MCF 10A (cell line): ENCODE measurements at regions of chr18 and their contacts with region 1.

Region 1: DNA sequence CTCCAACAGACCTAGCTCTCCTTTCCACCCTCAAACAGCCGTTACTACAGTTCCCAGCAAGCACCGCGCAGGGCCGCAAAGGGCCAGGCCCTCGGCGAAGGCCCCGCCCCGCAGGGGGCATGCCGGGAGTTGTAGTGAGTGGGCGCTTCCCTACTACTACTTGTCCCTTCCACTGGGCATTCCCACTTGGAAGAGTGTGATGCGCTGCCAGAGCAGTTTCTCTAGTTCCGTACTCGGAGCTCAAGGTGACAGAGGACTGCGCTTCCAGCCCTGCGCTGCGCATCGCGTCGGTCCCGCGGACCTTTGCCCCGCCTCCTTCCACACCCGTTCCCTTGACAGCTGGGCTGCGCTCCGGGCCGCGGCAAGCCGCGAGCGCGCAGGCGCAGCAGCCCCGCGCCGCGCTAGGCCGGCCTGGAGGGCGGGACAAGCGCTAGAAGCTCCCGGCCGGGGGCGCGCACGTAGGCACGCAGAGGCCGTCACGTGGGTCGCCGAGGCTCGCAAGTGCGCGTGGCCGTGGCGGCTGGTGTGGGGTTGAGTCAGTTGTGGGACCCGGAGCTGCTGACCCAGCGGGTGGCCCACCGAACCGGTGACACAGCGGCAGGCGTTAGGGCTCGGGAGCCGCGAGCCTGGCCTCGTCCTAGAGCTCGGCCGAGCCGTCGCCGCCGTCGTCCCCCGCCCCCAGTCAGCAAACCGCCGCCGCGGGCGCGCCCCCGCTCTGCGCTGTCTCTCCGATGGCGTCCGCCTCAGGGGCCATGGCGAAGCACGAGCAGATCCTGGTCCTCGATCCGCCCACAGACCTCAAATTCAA is at the start of gene VAPA:
- DNase-seq: peak; percentile 93
- H3K4me3 Mint-ChIP-seq: peak within 1 kb of the TSS; percentile 91
- H3K27ac Mint-ChIP-seq: peak within 1 kb of the TSS; percentile 96
- H3K4me1 Mint-ChIP-seq: peaks cover 13% of the 10 kb centered on the region
- H3K27me3 Mint-ChIP-seq: no peaks in the 10 kb centered on the region
- CTCF ChIP-seq: no peak
- total RNA-seq, gene VAPA: 247 and 286 TPM in 2 replicates

Region 2: DNA sequence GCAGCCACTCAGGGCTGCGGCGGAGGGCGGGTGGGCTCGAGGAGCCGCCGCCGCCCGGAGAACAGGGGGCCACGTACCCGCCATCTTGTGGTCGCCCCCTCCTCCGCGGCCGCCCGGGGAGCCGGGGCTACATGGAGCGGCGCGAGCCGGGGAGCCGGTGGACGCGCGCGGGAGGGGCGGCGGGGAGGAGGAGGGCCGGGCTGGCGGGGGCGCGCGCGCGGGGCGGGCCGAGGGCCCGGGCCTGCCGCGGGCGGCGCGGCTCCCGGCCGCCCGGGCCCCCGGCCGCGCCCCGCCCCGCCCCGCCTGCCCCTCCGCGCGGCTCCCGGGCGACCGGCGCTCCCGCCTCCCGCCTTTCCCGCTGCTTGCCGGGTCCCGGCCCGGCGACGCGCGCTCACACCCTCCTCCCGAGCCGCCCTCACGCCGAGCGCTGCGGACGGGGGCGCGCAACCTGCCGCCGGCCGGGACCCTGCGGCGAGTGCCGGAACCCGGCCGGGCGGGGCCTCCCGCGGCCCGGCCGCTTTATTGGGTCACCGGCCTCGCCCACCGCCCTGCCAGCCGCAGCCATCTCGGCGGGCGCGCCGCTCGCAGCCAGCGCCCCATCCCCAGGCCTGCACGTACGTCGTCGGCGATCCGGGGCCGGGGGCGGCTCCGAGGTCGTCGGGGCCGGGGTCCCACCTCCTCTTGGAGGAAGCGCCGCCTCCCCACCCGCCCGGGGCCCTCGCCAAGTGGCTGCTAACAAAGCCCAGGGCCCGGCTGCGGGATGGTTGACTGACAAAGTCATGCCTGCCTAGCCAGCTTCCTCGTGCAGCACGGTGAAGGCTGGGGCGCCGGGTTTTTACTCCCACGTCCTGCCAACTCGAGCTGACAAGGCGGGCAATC is 299.1 kb before region 1 on chr18 and contains the start of gene PPP4R1:
- CTCF ChIA-PET with region 1: no interaction called
- POLR2A ChIA-PET with region 1: interaction called, 11 read pairs
- intact Hi-C with region 1: loop called (anchors 10 kb)
- DNase-seq: peak; percentile 68
- H3K4me3 Mint-ChIP-seq: peak within 1 kb of the TSS; percentile 97
- H3K27ac Mint-ChIP-seq: peak within 1 kb of the TSS; percentile 96
- H3K4me1 Mint-ChIP-seq: peaks cover 28% of the 10 kb centered on the region
- H3K27me3 Mint-ChIP-seq: no peaks in the 10 kb centered on the region
- CTCF ChIP-seq: no peak
- total RNA-seq, gene PPP4R1: 88.0 and 109 TPM in 2 replicates

Region 3: GRCh38 chr18:9743200-9744016 is 170.3 kb before region 1 on chr18:
- CTCF ChIA-PET with region 1: no interaction called
- POLR2A ChIA-PET with region 1: interaction called, 20 read pairs
- intact Hi-C with region 1: no loop called
- DNase-seq: peak; percentile 99
- H3K4me3 Mint-ChIP-seq: peak overlapping the region; percentile 48
- H3K27ac Mint-ChIP-seq: peak overlapping the region; percentile 79
- H3K4me1 Mint-ChIP-seq: peaks cover 29% of the 10 kb centered on the region
- H3K27me3 Mint-ChIP-seq: no peaks in the 10 kb centered on the region
- CTCF ChIP-seq: no peak

Region 4: DNA sequence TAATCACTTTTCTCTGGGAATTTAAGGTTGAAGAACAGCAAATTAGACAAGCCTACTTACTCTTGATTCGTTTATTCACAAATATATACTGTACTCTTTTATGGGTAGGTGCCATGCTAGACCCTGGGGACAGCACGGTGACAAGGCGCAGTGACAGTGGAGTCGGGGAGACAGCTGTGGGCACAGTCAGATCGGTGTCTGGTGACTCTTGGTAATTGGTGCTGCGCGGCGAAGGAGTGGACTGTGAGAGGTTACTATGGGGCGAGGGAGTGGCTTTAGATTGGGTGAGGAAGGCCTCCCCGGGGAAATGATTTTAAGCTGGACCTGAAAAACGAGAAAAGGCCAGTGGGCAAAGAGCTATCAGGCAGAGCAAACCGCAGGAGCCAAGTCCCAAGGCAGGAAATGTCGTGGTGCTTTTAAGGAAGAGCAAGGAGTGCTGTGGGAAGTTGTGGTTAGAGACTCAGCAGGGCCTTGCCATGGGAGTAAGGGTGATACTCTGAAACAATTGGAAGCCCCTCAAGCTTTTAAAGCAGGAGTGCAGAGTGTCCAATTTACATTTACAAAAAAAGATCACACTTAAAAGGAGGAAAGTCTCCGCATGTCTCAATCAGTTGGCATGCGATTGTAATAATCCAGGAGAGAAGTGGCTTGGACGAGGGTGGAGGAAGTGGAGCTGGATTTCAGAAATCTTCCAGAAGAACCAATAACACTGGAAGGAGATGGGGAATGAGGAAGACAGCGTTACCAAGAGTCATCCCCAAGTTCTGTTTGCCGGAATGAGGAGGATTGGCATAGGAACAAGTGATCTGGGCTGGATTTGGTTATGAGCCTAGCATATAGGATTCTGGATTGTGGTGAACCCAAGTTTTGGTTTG is 64.1 kb before region 1 on chr18:
- CTCF ChIA-PET with region 1: interaction called, 3 read pairs
- POLR2A ChIA-PET with region 1: interaction called, 16 read pairs
- intact Hi-C with region 1: no loop called
- DNase-seq: no peak
- H3K4me3 Mint-ChIP-seq: no peak overlapping the region
- H3K27ac Mint-ChIP-seq: no peak overlapping the region
- H3K4me1 Mint-ChIP-seq: peaks cover 45% of the 10 kb centered on the region
- H3K27me3 Mint-ChIP-seq: peaks cover 11% of the 10 kb centered on the region
- CTCF ChIP-seq: no peak

Region 5: GRCh38 chr18:9898792-9899549 is 14.8 kb before region 1 on chr18:
- CTCF ChIA-PET with region 1: no interaction called
- POLR2A ChIA-PET with region 1: interaction called, 37 read pairs
- intact Hi-C with region 1: no loop called
- DNase-seq: no peak
- H3K4me3 Mint-ChIP-seq: no peak overlapping the region
- H3K27ac Mint-ChIP-seq: no peak overlapping the region
- H3K4me1 Mint-ChIP-seq: peaks cover 7% of the 10 kb centered on the region
- H3K27me3 Mint-ChIP-seq: no peaks in the 10 kb centered on the region
- CTCF ChIP-seq: no peak

Region 6: DNA sequence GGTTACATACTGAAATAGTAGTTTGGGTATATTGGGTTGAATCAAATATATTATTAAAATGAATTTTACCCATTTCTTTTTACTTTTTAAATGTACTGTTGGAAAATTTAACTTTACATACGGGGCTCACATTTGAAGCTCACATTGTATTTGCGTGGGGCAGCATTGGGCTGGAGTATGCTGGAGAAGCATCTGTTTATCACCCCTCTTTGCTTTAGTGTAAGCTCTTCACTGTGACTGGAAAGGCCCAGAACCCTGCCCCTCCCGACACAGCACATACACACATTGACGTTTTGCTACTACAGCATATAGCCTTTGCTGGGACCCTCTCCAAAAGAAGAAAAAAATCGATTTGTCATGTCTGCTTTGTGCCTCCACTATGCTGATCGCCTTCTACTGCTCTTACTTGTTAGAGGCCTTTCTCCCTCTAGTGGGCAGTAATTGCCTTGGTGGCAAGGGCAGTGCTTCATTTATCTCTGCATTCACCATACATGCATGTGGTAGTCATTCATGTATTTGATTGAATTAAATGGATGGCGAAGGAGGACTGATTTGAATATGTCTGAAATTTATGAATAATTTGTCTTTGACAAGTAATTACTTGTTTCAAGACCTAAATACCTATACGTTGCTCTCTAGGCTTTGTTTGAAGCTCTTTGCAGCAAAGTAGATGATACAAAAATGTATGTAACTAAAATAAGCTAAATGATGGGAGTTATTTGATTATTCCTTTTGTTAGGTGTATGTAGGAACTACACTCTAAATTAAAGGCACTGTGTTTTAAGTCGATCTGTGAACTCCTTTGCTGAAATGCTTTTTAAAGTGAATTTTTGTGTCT is 37.5 kb after region 1 on chr18:
- CTCF ChIA-PET with region 1: interaction called, 5 read pairs
- POLR2A ChIA-PET with region 1: interaction called, 14 read pairs
- intact Hi-C with region 1: no loop called
- DNase-seq: peak; percentile 70
- H3K4me3 Mint-ChIP-seq: no peak overlapping the region
- H3K27ac Mint-ChIP-seq: peak overlapping the region; percentile 64
- H3K4me1 Mint-ChIP-seq: peaks cover 33% of the 10 kb centered on the region
- H3K27me3 Mint-ChIP-seq: no peaks in the 10 kb centered on the region
- CTCF ChIP-seq: peak; percentile 67

Region 7: GRCh38 chr18:10072671-10073175 is 159.0 kb after region 1 on chr18:
- CTCF ChIA-PET with region 1: no interaction called
- POLR2A ChIA-PET with region 1: no interaction called
- intact Hi-C with region 1: no loop called
- DNase-seq: peak; percentile 62
- H3K4me3 Mint-ChIP-seq: no peak overlapping the region
- H3K27ac Mint-ChIP-seq: no peak overlapping the region
- H3K4me1 Mint-ChIP-seq: peaks cover 7% of the 10 kb centered on the region
- H3K27me3 Mint-ChIP-seq: peaks cover 11% of the 10 kb centered on the region
- CTCF ChIP-seq: no peak

Region 8: GRCh38 chr18:10378688-10379363 is 465.1 kb after region 1 on chr18:
- CTCF ChIA-PET with region 1: no interaction called
- POLR2A ChIA-PET with region 1: no interaction called
- intact Hi-C with region 1: no loop called
- DNase-seq: no peak
- H3K4me3 Mint-ChIP-seq: no peak overlapping the region
- H3K27ac Mint-ChIP-seq: no peak overlapping the region
- H3K4me1 Mint-ChIP-seq: peaks cover 21% of the 10 kb centered on the region
- H3K27me3 Mint-ChIP-seq: no peaks in the 10 kb centered on the region
- CTCF ChIP-seq: no peak

Region 9: GRCh38 chr18:10682368-10682714 is 768.6 kb after region 1 on chr18:
- CTCF ChIA-PET with region 1: no interaction called
- POLR2A ChIA-PET with region 1: no interaction called
- intact Hi-C with region 1: no loop called
- DNase-seq: no peak
- H3K4me3 Mint-ChIP-seq: no peak overlapping the region
- H3K27ac Mint-ChIP-seq: no peak overlapping the region
- H3K4me1 Mint-ChIP-seq: peaks cover 15% of the 10 kb centered on the region
- H3K27me3 Mint-ChIP-seq: no peaks in the 10 kb centered on the region
- CTCF ChIP-seq: no peak

Region 10: GRCh38 chr18:11163665-11164064 is 1249.9 kb after region 1 on chr18:
- CTCF ChIA-PET with region 1: no interaction called
- POLR2A ChIA-PET with region 1: no interaction called
- intact Hi-C with region 1: no loop called
- DNase-seq: no peak
- H3K4me3 Mint-ChIP-seq: no peak overlapping the region
- H3K27ac Mint-ChIP-seq: no peak overlapping the region
- H3K4me1 Mint-ChIP-seq: no peaks in the 10 kb centered on the region
- H3K27me3 Mint-ChIP-seq: peaks cover 13% of the 10 kb centered on the region
- CTCF ChIP-seq: no peak